Naive thymus-derived CD4-positive, alpha-beta T cell (primary cell): ENCODE measurements at regions of chr4 and their contacts with region 1.

Region 1: DNA sequence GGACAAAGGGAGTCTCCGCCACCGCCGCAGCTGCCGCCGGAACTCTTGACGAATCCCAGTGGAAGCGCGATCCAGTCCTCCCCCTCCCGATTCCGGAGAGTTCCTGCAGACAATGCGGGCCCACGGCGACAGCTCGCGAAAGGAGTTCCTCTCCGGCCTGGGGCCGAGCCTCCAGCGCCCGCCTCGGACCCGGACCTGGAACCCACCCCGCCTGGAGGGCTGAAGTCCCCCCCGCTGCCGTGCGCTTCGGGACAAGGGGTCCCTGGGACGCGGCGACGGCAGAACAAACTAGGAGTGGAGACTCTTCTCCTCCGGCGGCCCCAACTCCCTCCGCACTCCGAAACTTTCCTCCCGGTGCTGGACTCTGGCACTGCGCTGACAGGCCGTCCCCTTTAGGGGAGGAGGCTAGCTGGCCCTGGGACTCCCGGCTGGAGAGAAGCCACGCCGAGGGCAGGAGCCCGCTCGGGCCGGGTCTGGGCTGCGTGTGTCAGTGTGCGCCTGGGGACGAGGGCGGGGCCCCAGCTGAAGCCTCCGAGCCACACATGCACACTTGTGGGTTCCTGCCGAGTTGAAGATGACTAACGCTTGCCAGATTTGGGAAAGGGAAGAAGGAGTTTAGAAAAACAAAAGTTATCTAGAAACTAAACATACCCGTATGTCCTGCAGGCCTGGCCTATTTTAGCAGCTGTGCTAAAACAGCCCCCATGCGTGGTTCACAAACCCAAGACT is at the start of gene ANTXR2:
- DNase-seq: peak; percentile 49 to 75 (median 56)
- ATAC-seq: peak; percentile 85
- H3K4me3 ChIP-seq: peak within 1 kb of the TSS; percentile 76
- H3K4me3 Mint-ChIP-seq: peak within 1 kb of the TSS; percentile 82 to 99 (median 96)
- H3K27ac ChIP-seq: peak within 1 kb of the TSS; percentile 86
- H3K27ac Mint-ChIP-seq: peak within 1 kb of the TSS; percentile 88 to 98 (median 96)
- H3K4me1 ChIP-seq: peaks cover 23 to 29% of the 10 kb centered on the region in 2 donors
- H3K4me1 Mint-ChIP-seq: peaks cover 25 to 76% (median 62%) of the 10 kb centered on the region in 7 donors
- H3K27me3 ChIP-seq: no peaks in the 10 kb centered on the region
- H3K27me3 Mint-ChIP-seq: peaks cover 0 to 3% (median 0%) of the 10 kb centered on the region in 5 donors
- total RNA-seq, gene ANTXR2: 20.3 to 69.8 (median 50.0) TPM

Region 2: DNA sequence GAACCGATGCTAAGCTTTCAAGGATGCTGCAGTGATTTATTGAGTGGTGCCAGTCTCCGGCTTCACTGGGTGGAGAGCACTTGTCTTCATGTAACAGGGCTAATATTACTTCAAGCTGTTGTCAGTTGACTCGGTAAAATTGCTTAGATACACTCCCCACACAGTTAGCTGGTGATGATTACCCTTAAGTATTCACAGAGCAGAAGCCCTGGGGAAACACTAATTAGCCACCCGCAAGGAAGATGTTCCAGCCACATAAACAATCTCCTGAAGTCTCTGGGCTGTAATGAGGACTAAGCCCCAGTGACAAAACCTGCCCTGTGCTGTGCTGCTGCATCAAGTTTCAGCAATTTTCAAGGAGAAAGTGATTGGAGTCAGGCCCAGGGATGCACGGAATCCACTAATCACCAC is 627.5 kb before region 1 on chr4:
- CTCF ChIA-PET with region 1: no interaction called
- POLR2A ChIA-PET with region 1: no interaction called
- intact Hi-C with region 1: no loop called
- DNase-seq: no peak
- ATAC-seq: no peak
- H3K4me3 ChIP-seq: no peak overlapping the region
- H3K4me3 Mint-ChIP-seq: no peak overlapping the region
- H3K27ac ChIP-seq: no peak overlapping the region
- H3K27ac Mint-ChIP-seq: no peak overlapping the region
- H3K4me1 ChIP-seq: no peaks in the 10 kb centered on the region
- H3K4me1 Mint-ChIP-seq: no peaks in the 10 kb centered on the region
- H3K27me3 ChIP-seq: no peaks in the 10 kb centered on the region
- H3K27me3 Mint-ChIP-seq: peaks cover 0 to 5% (median 0%) of the 10 kb centered on the region in 5 donors

Region 3: GRCh38 chr4:79917246-79917645 is 155.7 kb before region 1 on chr4:
- CTCF ChIA-PET with region 1: no interaction called
- POLR2A ChIA-PET with region 1: no interaction called
- intact Hi-C with region 1: loop called in 1 of 2 experiments (anchors 1 kb)
- DNase-seq: peak in 7 of 9 donors; percentile 10 to 43 (median 22)
- ATAC-seq: peak; percentile 62
- H3K4me3 ChIP-seq: no peak overlapping the region
- H3K4me3 Mint-ChIP-seq: no peak overlapping the region
- H3K27ac ChIP-seq: no peak overlapping the region
- H3K27ac Mint-ChIP-seq: no peak overlapping the region
- H3K4me1 ChIP-seq: no peaks in the 10 kb centered on the region
- H3K4me1 Mint-ChIP-seq: peaks cover 0 to 16% (median 6%) of the 10 kb centered on the region in 7 donors
- H3K27me3 ChIP-seq: no peaks in the 10 kb centered on the region
- H3K27me3 Mint-ChIP-seq: no peaks in the 10 kb centered on the region

Region 4: DNA sequence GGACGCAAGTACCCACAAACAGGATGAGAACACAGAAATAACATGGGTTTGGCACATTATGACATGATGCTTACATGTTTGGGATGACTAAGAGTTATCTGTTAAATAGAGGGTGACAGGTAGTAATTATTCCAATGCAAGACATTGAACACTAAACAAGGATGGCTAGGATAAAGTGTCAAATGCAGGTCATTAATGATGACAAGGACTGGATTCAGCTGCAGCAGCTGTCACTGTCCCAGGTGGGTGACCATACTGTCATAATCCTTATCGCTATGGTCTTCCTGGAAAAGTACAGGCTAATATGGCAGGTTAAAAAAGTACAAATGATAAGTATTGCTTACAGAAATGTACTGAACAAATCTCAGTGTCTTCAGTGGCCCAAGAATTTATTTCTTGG is 123.7 kb before region 1 on chr4:
- CTCF ChIA-PET with region 1: no interaction called
- POLR2A ChIA-PET with region 1: no interaction called
- intact Hi-C with region 1: no loop called
- DNase-seq: no peak
- ATAC-seq: no peak
- H3K4me3 ChIP-seq: no peak overlapping the region
- H3K4me3 Mint-ChIP-seq: no peak overlapping the region
- H3K27ac ChIP-seq: no peak overlapping the region
- H3K27ac Mint-ChIP-seq: no peak overlapping the region
- H3K4me1 ChIP-seq: no peaks in the 10 kb centered on the region
- H3K4me1 Mint-ChIP-seq: peaks cover 0 to 17% (median 12%) of the 10 kb centered on the region in 7 donors
- H3K27me3 ChIP-seq: no peaks in the 10 kb centered on the region
- H3K27me3 Mint-ChIP-seq: no peaks in the 10 kb centered on the region

Region 5: DNA sequence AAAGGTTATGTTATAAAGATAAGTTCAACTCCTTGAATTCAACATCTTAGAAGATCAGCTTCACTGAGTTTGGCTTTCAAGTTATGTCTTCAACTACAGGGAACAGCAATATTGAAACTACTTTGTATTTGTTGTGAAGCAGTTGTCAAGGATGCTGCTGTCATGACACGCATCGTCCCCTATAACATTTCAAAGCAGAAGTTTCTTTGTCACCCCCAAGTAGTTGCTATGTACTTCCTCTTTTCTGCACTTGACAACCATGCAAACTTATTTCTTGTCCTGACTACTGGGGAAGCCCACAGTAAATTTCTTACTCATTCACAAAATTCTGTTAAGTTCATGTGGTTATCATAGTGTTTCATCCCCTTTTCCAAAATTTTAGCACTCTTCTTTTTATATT is 14.2 kb before region 1 on chr4:
- CTCF ChIA-PET with region 1: no interaction called
- POLR2A ChIA-PET with region 1: interaction called, 14 read pairs
- intact Hi-C with region 1: loop called (anchors 1 kb)
- DNase-seq: peak in 7 of 9 donors; percentile 53 to 89 (median 84)
- ATAC-seq: peak; percentile 96
- H3K4me3 ChIP-seq: no peak overlapping the region
- H3K4me3 Mint-ChIP-seq: peak overlapping the region; percentile 54 to 86 (median 74)
- H3K27ac ChIP-seq: peak overlapping the region; percentile 86
- H3K27ac Mint-ChIP-seq: peak overlapping the region; percentile 91 to 99 (median 96)
- H3K4me1 ChIP-seq: peaks cover 10 to 13% of the 10 kb centered on the region in 2 donors
- H3K4me1 Mint-ChIP-seq: peaks cover 12 to 50% (median 42%) of the 10 kb centered on the region in 7 donors
- H3K27me3 ChIP-seq: no peaks in the 10 kb centered on the region
- H3K27me3 Mint-ChIP-seq: no peaks in the 10 kb centered on the region

Region 6: DNA sequence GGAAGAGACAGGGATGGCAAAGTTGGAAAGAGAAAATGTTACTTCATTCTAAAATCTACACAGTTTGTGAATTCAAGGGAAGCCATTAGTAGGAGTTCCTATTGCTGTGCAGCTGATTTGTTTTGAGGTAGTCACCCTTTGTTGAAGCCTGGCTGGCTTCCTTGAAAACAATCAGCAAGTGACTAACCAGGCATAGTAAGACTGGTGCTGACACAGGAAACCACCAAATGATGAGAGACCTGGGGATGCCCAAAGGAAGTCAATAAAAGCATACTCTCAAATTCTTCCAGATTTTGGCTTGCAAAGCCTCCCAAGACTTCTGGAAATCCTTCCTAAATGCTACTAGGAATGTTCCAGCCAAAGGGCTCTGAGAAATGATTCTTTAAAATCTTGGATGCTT is 100.5 kb after region 1 on chr4:
- CTCF ChIA-PET with region 1: no interaction called
- POLR2A ChIA-PET with region 1: interaction called, 18 read pairs
- intact Hi-C with region 1: loop called in 1 of 2 experiments (anchors 1 kb)
- DNase-seq: peak in 8 of 9 donors; percentile 42 to 78 (median 72)
- ATAC-seq: peak; percentile 98
- H3K4me3 ChIP-seq: peak overlapping the region; percentile 26
- H3K4me3 Mint-ChIP-seq: peak overlapping the region; percentile 66 to 84 (median 76)
- H3K27ac ChIP-seq: peak overlapping the region; percentile 75
- H3K27ac Mint-ChIP-seq: peak overlapping the region; percentile 92 to 99 (median 96)
- H3K4me1 ChIP-seq: peaks cover 33 to 40% of the 10 kb centered on the region in 2 donors
- H3K4me1 Mint-ChIP-seq: peaks cover 33 to 72% (median 60%) of the 10 kb centered on the region in 7 donors
- H3K27me3 ChIP-seq: no peaks in the 10 kb centered on the region
- H3K27me3 Mint-ChIP-seq: peaks cover 0 to 2% (median 0%) of the 10 kb centered on the region in 5 donors

Region 7: DNA sequence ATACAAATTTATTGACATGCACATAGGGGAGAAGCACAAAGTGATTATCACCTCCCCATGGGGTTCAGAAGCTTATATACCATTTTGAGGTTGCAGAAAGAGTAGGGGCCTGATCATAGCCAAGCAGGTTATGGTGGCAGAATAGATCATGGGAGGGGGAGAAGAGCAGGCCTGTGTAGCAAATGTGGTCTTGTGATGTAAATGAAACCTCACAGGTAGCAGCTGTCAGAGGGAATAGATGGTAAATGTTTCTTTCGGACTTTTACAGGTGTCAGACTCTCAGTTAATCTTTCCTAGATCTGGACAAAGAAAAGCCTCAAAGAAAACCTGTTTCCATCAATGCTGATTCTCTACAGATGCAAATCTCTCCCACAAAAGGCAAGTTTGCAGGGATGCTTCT is 347.0 kb after region 1 on chr4:
- CTCF ChIA-PET with region 1: no interaction called
- POLR2A ChIA-PET with region 1: no interaction called
- intact Hi-C with region 1: no loop called
- DNase-seq: no peak
- ATAC-seq: no peak
- H3K4me3 ChIP-seq: no peak overlapping the region
- H3K4me3 Mint-ChIP-seq: no peak overlapping the region
- H3K27ac ChIP-seq: no peak overlapping the region
- H3K27ac Mint-ChIP-seq: peak overlapping the region in 1 of 9 donors; percentile 10
- H3K4me1 ChIP-seq: peaks cover 0 to 13% of the 10 kb centered on the region in 2 donors
- H3K4me1 Mint-ChIP-seq: peaks cover 2 to 25% (median 9%) of the 10 kb centered on the region in 7 donors
- H3K27me3 ChIP-seq: no peaks in the 10 kb centered on the region
- H3K27me3 Mint-ChIP-seq: no peaks in the 10 kb centered on the region

Region 8: DNA sequence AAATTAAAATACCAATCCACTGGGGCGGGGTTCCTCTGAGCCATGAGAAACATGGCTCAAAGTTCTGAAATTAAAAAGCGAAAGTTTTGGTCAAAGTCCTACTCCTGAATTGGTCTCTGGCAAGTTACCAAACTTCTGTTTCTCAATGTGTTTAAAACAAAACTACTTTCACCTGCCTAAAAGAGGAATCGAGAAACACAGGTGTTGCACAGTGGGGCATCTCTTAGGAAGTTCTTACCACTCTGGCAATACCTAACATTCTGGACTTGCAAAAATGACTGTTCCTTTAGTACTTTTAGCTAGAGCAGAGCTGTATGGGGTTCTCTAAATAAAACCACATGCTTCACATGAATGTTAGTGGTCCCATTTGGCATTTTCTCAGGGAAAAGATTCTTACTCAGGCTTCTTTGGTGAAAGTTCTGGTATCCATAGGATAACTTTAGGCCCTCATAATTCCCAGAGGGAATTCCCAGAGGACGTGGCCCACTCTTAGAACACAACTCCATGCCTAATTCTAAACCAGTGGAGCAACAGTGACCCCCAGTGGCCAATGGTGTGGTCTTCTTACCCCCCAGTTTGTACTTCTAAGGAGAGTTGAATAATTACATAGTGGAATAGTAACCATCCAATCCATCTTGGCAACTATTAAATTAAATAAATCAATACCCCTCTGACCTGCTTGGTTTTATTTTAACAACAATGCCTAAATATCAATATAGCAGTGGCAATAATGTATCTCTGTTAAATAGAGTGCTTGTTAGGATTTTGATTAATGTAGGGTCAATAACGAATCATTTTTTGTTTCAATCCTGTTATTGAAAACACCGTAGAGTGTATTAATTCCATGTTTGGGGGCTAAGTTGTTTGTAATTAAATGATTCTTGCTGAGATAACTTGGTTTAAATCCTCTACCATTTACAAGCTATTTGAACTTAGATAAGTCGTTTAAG is 979.5 kb after region 1 on chr4:
- CTCF ChIA-PET with region 1: no interaction called
- POLR2A ChIA-PET with region 1: no interaction called
- intact Hi-C with region 1: no loop called
- DNase-seq: peak in 7 of 9 donors; percentile 11 to 52 (median 26)
- ATAC-seq: peak; percentile 54
- H3K4me3 ChIP-seq: no peak overlapping the region
- H3K4me3 Mint-ChIP-seq: no peak overlapping the region
- H3K27ac ChIP-seq: no peak overlapping the region
- H3K27ac Mint-ChIP-seq: no peak overlapping the region
- H3K4me1 ChIP-seq: no peaks in the 10 kb centered on the region
- H3K4me1 Mint-ChIP-seq: no peaks in the 10 kb centered on the region
- H3K27me3 ChIP-seq: peaks cover 0 to 1% of the 10 kb centered on the region in 2 donors
- H3K27me3 Mint-ChIP-seq: peaks cover 0 to 16% (median 11%) of the 10 kb centered on the region in 5 donors